ENCODE measurements at regions of chr19 and their contacts with region 1.

Region 1: DNA sequence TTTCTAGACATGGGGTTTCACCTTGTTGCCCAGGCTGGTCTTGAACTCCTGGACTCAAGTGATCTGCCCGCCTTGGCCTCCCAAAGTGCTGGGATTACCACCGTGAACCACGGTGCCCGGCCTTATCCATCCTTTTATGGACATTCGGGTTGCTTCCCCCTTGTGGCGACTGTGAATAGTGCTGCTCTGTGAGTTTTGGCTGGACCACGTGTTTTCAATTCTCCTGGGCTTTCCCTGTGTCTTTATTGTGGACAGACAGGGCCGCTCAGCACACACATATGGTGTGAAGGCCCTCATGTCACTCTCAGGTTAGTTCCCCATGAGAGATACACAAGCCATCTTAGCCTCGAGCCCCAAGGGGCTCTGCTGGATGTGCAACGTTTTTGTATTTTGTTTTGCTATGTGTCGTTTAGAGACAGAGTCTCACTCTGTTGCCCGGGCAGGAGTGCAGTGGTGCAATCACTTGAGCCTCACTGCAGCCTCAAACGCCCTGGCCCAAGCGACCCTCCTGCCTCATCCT is 40.5 kb downstream of the MAU2 start:
- DNase-seq: peak; percentile 87
- ATAC-seq: peak; percentile 86

Region 2: DNA sequence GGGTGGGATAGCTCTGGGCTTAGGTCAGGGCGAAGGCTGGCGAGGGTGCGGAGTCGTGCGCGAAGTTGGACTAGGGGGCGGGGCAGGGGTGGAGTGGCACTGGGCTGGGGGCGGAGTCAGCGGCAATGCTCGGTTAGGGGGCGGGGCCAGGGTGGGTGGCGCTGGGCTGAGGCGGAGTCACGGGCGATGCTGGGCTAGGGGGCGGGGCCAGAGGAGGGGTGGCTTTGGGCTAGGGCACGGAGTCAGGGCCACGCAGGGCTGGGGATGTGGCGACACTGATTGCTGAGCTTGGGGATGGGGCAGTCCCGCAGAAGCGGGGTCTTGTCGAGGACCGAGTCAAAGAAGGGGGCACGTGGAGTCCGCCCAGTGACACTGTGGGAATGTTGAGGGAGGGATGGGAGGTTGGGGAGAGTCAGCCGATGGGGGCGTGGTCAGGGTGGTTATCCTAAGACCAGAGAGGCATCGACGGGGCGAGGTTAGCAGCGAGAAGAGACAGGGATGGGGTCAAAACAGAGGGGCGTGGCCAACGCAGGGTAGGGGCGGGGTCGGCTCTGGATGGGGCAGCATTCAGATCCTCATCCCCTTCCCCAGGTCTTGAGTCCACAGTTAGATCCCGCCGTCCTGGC is 428.8 kb before region 1 on chr19:
- intact Hi-C with region 1: no loop called
- DNase-seq: peak; percentile 94
- ATAC-seq: peak; percentile 94

Region 3: DNA sequence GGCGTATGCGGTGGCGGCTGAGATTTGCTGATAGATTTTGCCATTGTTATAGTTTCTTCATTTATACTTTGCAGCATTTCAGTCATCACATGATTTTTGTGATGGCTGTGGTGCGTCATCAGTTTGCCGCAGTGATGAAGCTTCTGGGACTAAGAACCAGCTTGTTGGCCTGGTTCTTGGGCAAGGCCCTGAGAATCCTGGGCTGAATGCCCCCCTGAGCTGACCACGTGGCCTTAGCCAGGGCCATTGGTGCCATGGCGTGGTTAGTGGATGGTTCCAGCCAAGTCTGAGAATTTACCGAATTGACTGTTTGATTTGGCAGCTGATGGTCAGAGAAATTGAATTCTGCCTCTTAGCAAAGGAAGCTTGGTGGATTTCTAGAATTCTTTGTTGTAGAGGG is 62.2 kb after region 1 on chr19:
- intact Hi-C with region 1: no loop called
- DNase-seq: no peak
- ATAC-seq: no peak

Region 4: DNA sequence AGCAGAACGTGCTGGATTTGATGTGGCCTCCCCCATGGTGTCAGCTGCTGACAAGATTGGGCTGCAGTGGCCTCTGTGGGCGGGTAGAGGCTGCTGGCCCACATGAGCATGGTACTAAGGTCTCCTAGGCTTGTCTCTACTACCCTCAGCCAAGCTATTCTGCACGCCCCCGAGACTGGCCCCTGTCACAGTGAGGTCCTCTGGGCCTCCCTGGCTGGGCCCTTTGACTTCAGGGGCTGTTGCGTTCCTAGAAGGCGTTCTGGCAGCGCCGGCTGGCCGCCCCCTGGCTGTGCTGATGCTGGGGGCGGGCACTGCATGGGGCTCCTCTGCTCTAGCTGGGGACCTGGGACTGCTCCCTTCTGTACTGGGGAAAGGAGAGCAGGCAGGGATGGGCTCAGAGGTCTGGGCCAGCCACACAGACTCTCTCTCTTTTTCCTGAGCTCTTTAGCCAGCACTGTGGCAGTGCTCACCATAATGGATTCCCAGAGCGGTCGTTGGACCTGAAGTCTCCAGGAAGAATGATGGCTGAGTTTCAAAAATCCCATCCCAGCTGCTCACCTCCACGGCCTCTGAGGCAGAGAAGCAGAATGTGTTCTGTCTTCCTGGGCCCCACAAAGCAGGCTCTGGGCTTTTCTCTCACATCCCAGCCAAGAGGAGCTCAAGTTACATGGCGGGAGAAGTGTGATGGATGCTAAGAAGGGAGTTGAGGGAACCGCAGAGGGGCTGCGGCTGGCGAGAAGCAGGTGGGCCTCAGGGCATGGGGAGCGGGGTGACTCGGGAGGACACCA is 121.9 kb after region 1 on chr19:
- intact Hi-C with region 1: loop called (anchors 5 kb)
- DNase-seq: no peak
- ATAC-seq: peak; percentile 39